MCF 10A (cell line): ENCODE measurements at regions of chr1 and their contacts with region 1.

Region 1: GRCh38 chr1:11907275-11908094 is 18.7 kb downstream of the KIAA2013 start:
- DNase-seq: peak; percentile 94
- H3K4me3 Mint-ChIP-seq: peak overlapping the region; percentile 89
- H3K27ac Mint-ChIP-seq: peak overlapping the region; percentile 100
- H3K4me1 Mint-ChIP-seq: peaks cover 5% of the 10 kb centered on the region
- H3K27me3 Mint-ChIP-seq: no peaks in the 10 kb centered on the region
- CTCF ChIP-seq: peak; percentile 65

Region 2: GRCh38 chr1:11654137-11654938 is 253.1 kb before region 1 on chr1 and contains the starts of genes FBXO2 and FBXO44:
- CTCF ChIA-PET with region 1: no interaction called
- POLR2A ChIA-PET with region 1: interaction called, 13 read pairs
- intact Hi-C with region 1: no loop called
- DNase-seq: peak; percentile 67
- H3K4me3 Mint-ChIP-seq: peak within 1 kb of the TSS; percentile 76
- H3K27ac Mint-ChIP-seq: peak within 1 kb of the TSS; percentile 66
- H3K4me1 Mint-ChIP-seq: no peaks in the 10 kb centered on the region
- H3K27me3 Mint-ChIP-seq: no peaks in the 10 kb centered on the region
- CTCF ChIP-seq: no peak
- total RNA-seq, gene FBXO2: 3.3 and 5.3 TPM in 2 replicates
- total RNA-seq, gene FBXO44: 16.0 and 16.3 TPM in 2 replicates

Region 3: GRCh38 chr1:11838349-11839272 is 68.9 kb before region 1 on chr1:
- CTCF ChIA-PET with region 1: interaction called, 22 read pairs
- POLR2A ChIA-PET with region 1: interaction called, 56 read pairs
- intact Hi-C with region 1: loop called (anchors 1 kb)
- DNase-seq: peak; percentile 59
- H3K4me3 Mint-ChIP-seq: no peak overlapping the region
- H3K27ac Mint-ChIP-seq: no peak overlapping the region
- H3K4me1 Mint-ChIP-seq: no peaks in the 10 kb centered on the region
- H3K27me3 Mint-ChIP-seq: no peaks in the 10 kb centered on the region
- CTCF ChIP-seq: peak; percentile 99

Region 4: GRCh38 chr1:11925938-11926292 is 18.4 kb after region 1 on chr1:
- CTCF ChIA-PET with region 1: no interaction called
- POLR2A ChIA-PET with region 1: interaction called, 123 read pairs
- intact Hi-C with region 1: no loop called
- DNase-seq: no peak
- H3K4me3 Mint-ChIP-seq: peak overlapping the region; percentile 75
- H3K27ac Mint-ChIP-seq: peak overlapping the region; percentile 60
- H3K4me1 Mint-ChIP-seq: peaks cover 22% of the 10 kb centered on the region
- H3K27me3 Mint-ChIP-seq: no peaks in the 10 kb centered on the region
- CTCF ChIP-seq: no peak

Region 5: DNA sequence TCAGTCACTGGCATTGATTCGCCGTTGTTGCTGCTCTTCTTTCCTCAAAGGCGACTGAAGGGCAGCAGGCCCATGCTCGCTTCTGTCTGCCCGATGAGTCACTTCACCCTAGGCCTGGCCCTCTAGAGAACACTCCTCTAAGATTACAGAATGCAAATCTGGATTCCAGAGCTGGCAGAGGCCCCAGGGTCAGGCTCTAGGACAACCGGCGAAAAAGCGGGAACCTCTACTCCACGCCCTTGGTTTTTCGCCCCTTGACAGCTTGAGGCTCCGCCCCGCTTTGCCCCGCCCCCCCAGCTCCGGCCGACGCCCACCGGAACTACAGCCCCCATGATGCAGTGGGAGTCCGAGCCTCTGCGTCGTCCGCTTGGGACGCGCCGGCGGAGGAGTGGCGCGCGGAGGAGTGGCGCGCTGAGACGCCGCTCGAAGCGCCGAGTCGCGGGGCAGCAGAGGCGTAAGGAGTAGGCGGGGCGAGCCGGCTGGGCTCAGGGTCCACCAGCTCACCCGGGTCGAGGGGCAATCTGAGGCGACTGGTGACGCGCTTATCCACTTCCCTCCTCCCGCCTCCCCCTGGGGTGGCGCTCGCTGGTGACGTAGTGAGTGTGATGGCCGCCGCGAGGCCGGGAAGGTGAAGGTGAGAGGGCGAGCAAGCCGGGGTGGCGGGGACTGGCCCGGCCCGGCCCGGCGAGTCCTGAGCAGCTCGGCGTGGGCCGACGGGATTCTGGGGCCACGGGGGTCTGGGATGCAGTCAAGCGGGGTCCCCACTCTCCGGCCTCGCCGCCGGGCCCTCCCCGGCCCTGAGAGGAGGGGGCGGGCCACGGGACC is 72.6 kb after region 1 on chr1 and contains the start of gene MFN2:
- CTCF ChIA-PET with region 1: interaction called, 3 read pairs
- POLR2A ChIA-PET with region 1: interaction called, 180 read pairs
- intact Hi-C with region 1: loop called (anchors 1 kb)
- DNase-seq: peak; percentile 97
- H3K4me3 Mint-ChIP-seq: peak within 1 kb of the TSS; percentile 78
- H3K27ac Mint-ChIP-seq: peak within 1 kb of the TSS; percentile 99
- H3K4me1 Mint-ChIP-seq: peaks cover 29% of the 10 kb centered on the region
- H3K27me3 Mint-ChIP-seq: no peaks in the 10 kb centered on the region
- CTCF ChIP-seq: no peak
- total RNA-seq, gene MFN2: 95.6 and 105 TPM in 2 replicates

Region 6: DNA sequence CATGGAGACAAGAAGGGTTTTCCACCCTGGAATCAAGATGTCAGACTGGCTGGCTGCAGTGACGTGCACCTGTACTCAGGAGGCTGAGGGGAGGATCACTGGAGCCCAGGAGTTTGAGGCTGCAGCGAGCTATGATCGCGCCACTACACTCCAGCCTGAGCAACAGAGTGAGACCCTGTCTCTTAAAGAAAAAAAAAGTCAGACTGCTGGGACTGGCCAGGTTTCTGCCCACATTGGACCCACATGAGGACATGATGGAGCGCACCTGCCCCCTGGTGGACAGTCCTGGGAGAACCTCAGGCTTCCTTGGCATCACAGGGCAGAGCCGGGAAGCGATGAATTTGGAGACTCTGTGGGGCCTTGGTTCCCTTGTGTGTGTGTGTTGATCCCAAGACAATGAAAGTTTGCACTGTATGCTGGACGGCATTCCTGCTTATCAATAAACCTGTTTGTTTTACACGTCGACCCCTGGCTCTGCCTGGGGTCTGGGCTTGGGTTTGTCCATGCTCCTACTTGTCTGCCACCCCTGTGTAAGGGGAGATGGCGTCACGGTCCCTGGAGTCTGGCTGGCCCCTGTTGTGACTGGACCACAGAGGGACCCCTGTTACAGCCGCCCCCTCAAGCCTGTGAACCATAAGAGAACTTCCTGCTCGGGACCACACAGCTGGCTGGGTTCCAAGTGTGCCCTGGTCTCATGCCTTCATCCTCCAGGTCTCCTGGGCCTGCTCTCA is 301.4 kb after region 1 on chr1:
- CTCF ChIA-PET with region 1: no interaction called
- POLR2A ChIA-PET with region 1: interaction called, 5 read pairs
- intact Hi-C with region 1: loop called (anchors 5 kb)
- DNase-seq: peak; percentile 86
- H3K4me3 Mint-ChIP-seq: no peak overlapping the region
- H3K27ac Mint-ChIP-seq: no peak overlapping the region
- H3K4me1 Mint-ChIP-seq: no peaks in the 10 kb centered on the region
- H3K27me3 Mint-ChIP-seq: peaks cover 22% of the 10 kb centered on the region
- CTCF ChIP-seq: peak; percentile 91